ENCODE measurements at regions of chr1 and their contacts with region 1.

Region 1: DNA sequence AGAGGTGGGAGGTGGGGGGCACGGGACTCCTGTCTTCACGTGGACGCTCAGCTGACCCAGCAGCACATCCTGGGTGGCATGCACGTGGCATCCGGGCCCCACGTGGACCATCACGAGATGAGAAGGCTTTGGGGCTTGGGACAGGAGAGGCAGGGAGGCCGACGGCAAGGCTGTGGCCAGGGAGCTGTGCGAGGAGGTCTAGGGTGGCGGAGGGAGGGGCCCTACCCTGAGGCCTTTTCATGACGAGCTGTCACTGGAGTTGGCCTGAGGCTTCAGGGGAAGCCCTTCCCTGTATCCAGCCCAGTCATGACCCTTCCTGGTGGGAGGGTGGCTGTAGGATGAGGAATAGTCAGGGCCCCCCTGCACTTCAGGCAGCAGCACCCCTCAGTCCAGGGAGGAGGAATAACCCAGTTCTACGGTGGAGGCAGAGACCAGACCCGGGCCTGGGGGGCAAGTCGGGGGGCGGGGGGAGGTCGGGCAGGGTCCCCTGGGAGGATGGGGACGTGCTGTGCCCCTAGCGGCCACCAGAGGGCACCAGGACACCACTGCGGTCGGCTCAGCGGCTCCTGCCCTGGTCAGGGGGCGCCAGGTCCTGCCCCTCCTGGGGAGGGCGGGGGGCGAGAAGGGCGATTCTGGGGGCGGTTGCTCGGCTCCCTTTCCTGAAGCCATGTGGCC is 2.0 kb upstream of the PERM1 start:
- DNase-seq: peak; percentile 78

Region 2: DNA sequence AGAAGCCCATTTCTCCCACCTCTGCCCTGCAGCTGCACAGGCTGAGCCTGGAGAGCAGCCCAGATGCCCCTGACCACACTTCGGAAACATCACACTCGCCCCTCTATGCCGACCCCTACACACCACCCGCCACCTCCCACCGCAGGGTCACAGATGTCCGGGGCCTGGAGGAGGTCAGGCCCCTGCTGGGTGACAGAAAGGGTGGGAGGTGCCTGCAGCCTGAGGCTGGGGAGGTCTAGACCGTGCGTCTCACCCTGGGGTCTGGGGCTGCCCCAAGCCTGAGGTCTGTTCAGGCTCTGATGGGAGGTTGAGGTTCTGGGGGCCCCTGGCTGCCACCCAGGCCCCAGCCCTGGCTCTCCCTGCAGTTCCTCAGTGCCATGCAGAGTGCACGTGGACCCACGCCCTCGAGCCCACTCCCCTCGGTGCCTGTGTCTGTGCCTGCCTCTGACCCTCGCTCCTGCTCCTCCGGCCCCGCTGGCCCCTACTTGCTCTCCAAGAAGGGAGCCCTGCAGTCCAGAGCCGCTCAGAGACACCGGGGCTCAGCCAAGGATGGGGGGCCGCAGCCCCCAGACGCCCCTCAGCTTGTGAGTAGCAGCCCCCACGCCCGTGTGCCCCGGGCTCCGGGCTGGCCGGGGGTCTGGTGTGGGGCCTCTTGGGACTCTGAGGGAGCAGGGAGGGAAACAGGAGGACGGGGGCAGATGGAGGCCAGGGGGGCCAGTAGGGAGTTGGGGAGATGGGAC is 10.3 kb before region 1 on chr1:
- CTCF ChIA-PET with region 1: no interaction called
- POLR2A ChIA-PET with region 1: no interaction called
- DNase-seq: no peak

Region 3: GRCh38 chr1:1001461-1002204 is 17.7 kb after region 1 on chr1:
- CTCF ChIA-PET with region 1: interaction called, 6 read pairs
- POLR2A ChIA-PET with region 1: interaction called, 14 read pairs
- DNase-seq: peak; percentile 85

Region 4: GRCh38 chr1:1063945-1064831 is 80.3 kb after region 1 on chr1:
- CTCF ChIA-PET with region 1: interaction called, 22 read pairs
- POLR2A ChIA-PET with region 1: interaction called, 3 read pairs
- DNase-seq: peak; percentile 73

Measured in HEK293T (cell line).